Left ventricle myocardium superior (tissue), 1 donor: ENCODE measurements at regions of chr11 and their contacts with region 1.

Region 1: DNA sequence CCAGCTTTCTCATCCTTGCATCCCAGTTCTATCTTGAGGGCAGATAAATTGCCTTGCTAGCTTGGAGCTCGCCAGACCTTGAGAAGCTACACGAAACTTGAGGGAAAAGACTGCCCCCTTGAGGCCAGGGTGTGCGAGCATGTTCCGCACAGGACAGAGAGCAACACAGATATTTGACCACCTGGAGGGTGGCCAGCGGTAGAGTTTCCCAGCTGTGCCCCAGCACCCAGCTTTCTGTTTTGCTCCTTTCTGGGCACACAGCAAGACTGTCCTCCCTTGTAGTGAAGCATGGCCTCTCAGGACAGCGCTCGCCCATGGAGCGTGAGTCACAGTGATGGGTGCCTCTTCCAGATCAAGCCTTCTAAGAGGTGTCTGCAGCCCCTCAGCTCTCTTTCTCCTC is 23.5 kb downstream of the SPATA19 start:
- DNase-seq: peak; percentile 66
- ATAC-seq: peak; percentile 83

Region 2: DNA sequence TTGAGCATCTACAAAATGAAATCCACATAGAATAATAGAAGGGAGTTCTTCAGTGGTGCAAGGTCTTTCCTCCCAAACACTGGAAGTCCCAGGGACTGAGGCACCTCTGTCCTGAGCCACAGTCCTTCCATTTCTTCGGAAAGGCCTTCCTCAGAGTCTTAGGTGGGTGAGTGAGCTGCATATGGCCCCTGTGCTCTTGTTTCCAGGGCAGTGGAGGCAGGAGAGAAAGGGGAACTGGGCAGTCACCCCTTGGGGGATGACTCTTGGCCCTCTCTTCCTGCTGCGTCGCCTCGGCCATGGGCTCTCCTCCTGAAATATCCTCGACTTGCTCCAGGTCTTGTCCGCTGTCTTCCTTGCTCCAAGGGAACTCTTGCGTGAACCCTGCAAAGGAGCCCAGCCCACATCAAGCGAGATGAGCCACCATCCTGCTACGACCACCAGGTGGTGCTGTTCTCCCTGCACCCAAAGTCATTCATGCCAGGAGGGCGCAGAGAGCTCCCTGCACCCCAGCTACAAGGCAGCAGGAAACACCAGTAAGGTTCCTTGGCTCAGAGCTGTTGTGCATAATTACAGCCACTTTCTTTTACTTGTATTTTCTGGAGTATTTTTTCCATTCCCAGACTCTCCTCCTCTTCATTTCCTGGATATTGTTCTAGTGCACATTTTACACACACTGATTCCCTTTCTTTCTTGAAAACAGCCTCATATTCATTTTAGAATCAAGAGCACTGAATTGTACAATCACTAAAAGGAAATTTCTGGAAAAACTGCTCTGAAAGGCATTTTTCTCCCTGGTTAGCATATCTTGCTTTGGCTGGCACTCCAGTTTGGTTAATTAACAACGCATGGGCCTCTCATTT is 687.2 kb before region 1 on chr11:
- intact Hi-C with region 1: loop called (anchors 10 kb)
- DNase-seq: peak; percentile 69
- ATAC-seq: peak; percentile 84